Activated T-helper 1 cell treated with anti-CD3 and anti-CD28 coated beads, Interleukin-12 subunit alpha, Interleukin-12 subunit beta, Interleukin-2, Interleukin-4 antibody, amounts not matched to agents 30 ng/mL and 10 ng/mL and 1 ng/mL, durations not matched to agents 14 hours and 24 hours and 36 hours (primary cell): ENCODE measurements at regions of chr2 and their contacts with region 1.

Region 1: DNA sequence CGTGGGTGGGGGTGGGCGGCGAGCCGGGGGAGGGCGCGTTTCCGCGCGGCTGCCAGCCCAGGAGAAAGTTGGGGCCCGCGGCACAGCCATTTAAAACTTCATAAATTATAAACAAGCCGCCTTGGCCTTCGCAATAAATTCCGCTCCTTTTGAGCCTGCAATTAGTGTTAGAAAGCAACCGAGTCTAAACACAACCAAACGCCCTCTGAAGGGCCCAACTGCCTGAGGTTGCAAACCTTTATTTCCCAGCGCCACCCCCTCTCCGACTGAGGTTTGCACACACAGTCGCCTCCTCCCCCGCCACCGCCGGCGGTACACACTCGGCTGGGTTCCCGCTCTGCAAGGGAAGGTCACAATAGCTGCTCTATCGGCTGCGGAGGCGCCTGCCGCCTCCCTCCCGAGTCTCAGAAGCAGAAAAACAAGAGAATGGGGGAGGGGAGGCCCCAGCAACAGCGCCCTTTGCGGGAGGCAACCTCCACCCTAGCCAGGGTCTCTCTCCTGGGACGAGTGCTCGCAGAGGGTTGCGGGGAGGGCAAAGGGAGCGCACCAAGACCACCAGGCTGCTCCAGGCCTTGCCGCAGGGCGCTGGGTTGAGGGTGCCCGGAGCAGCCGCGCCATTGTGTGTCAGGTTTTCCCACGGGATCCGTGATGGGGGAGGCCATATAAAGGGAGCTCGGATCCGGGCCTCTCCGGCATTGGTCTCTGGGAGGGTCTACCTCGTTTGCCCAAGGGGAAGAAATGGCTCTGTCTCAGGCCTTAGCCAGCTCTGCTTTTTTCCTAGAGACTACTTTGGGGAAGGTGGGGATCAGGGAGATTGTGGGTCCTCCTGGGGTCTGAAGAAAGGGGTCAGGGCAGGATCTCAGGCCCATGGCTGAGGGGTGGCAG is 13.4 kb upstream of the HOXD1 start:
- DNase-seq: no peak
- H3K4me3 Mint-ChIP-seq: no peak overlapping the region
- H3K27ac Mint-ChIP-seq: no peak overlapping the region
- H3K4me1 Mint-ChIP-seq: peaks cover 6% of the 10 kb centered on the region
- H3K27me3 Mint-ChIP-seq: peaks cover 84% of the 10 kb centered on the region

Region 2: GRCh38 chr2:174326161-174327020 is 1848.7 kb before region 1 on chr2:
- intact Hi-C with region 1: loop called (anchors 5 kb)
- DNase-seq: no peak
- H3K4me3 Mint-ChIP-seq: peak overlapping the region; percentile 77
- H3K27ac Mint-ChIP-seq: peak overlapping the region; percentile 35
- H3K4me1 Mint-ChIP-seq: peaks cover 15% of the 10 kb centered on the region
- H3K27me3 Mint-ChIP-seq: peaks cover 88% of the 10 kb centered on the region

Region 3: DNA sequence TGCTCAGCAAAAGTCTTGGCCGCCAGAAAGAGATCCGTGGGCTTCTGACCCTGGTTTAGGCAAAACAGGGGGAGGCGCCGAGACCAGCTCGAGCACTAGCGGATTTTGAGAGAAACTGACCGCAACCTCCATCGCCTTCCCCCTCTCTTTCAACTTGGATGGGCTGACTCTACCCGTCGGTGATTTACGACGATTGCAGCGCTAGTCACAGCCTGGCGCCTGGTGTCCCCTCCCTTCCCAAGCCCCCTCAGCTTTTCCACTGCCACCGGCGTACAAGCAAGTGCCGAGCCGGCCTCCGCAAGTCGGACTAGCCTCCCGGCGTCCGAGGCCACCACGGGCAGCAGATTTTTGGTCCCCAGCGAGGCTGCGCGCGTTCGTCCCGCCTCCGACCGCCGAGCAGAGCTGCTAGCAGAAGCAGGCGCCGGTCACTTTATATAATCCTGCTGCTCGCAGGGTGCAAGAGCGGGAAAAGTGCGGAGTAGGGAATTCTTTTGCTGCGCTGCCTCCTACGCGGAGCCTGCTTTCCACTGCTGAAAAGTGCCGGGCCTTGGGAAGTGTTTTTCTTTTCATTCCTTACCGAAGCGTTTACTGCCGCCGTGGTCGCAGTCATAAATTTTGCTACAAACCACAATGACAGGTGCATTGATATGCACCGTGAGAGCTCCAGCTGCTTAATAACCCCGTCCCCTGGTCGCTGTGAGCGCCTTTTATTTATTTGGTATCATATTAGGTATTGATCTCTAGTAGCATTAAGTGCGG is 10.3 kb before region 1 on chr2:
- intact Hi-C with region 1: loop called (anchors 1 kb)
- DNase-seq: no peak
- H3K4me3 Mint-ChIP-seq: no peak overlapping the region
- H3K27ac Mint-ChIP-seq: peak overlapping the region; percentile 67
- H3K4me1 Mint-ChIP-seq: no peaks in the 10 kb centered on the region
- H3K27me3 Mint-ChIP-seq: peaks cover 80% of the 10 kb centered on the region